Heart left ventricle (tissue), 16 donors: ENCODE measurements at regions of chr1 and their contacts with region 1.

Region 1: GRCh38 chr1:208652296-208653160 is 408.3 kb upstream of the PLXNA2 start:
- DNase-seq: peak in 4 of 5 donors; percentile 28 to 46 (median 36)
- ATAC-seq: peak in 3 of 4 donors; percentile 80 to 93 (median 82)
- H3K4me3 ChIP-seq: no peak overlapping the region
- H3K27ac ChIP-seq: no peak overlapping the region
- H3K4me1 ChIP-seq: peaks cover 0 to 12% (median 0%) of the 10 kb centered on the region in 12 donors
- H3K27me3 ChIP-seq: peaks cover 0 to 17% (median 0%) of the 10 kb centered on the region in 9 donors
- CTCF ChIP-seq: peak; percentile 73 to 91 (median 86)
- POLR2A ChIP-seq: no peak

Region 2: GRCh38 chr1:209190591-209191261 is 538.2 kb after region 1 on chr1:
- intact Hi-C with region 1: loop called in 7 of 10 experiments (anchors 2 to 5 kb)
- DNase-seq: peak in 3 of 5 donors; percentile 25 to 37 (median 34)
- ATAC-seq: peak in 3 of 4 donors; percentile 61 to 73 (median 71)
- H3K4me3 ChIP-seq: no peak overlapping the region
- H3K27ac ChIP-seq: no peak overlapping the region
- H3K4me1 ChIP-seq: no peaks in the 10 kb centered on the region
- H3K27me3 ChIP-seq: peaks cover 0 to 5% (median 0%) of the 10 kb centered on the region in 9 donors
- CTCF ChIP-seq: peak; percentile 46 to 78 (median 64)
- POLR2A ChIP-seq: no peak

Region 3: GRCh38 chr1:209248649-209249279 is 596.2 kb after region 1 on chr1:
- intact Hi-C with region 1: loop called in 1 of 10 experiments (anchors 5 kb)
- DNase-seq: peak in 1 of 5 donors; percentile 34
- ATAC-seq: peak in 3 of 4 donors; percentile 54 to 61 (median 55)
- H3K4me3 ChIP-seq: no peak overlapping the region
- H3K27ac ChIP-seq: no peak overlapping the region
- H3K4me1 ChIP-seq: no peaks in the 10 kb centered on the region
- H3K27me3 ChIP-seq: peaks cover 0 to 8% (median 0%) of the 10 kb centered on the region in 9 donors
- CTCF ChIP-seq: peak; percentile 83 to 98 (median 93)
- POLR2A ChIP-seq: no peak

Region 4: GRCh38 chr1:209354111-209354839 is 701.7 kb after region 1 on chr1:
- intact Hi-C with region 1: loop called in 1 of 10 experiments (anchors 5 kb)
- DNase-seq: peak; percentile 54 to 80 (median 71)
- ATAC-seq: peak; percentile 78 to 92 (median 90)
- H3K4me3 ChIP-seq: no peak overlapping the region
- H3K27ac ChIP-seq: no peak overlapping the region
- H3K4me1 ChIP-seq: peaks cover 0 to 10% (median 4%) of the 10 kb centered on the region in 12 donors
- H3K27me3 ChIP-seq: no peaks in the 10 kb centered on the region
- CTCF ChIP-seq: peak; percentile 67 to 88 (median 82)
- POLR2A ChIP-seq: no peak